Activated CD4-positive, alpha-beta T cell treated with anti-CD3 and anti-CD28 coated beads for 36 hours (primary cell): ENCODE measurements at regions of chr5 and their contacts with region 1.

Region 1: DNA sequence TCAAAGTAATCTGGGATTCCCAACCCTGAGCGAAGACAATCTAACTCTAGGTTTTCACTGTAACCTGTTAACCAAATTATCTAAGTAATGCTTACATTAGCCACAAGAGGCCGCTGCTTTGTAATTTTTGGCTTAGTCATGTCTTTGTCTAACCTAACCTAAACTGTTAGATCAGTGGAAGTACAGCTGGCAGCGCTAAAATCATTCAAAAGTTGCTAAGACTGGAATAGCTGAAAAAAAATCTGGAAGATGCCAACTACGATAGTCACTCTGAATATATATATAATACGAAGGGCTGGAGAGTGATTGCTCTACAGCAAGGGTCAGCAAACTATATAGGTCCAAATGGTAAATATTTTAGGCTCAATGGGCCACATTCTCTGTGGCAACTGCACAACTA is 60.2 kb downstream of the FBXO38 start:
- DNase-seq: peak; percentile 63
- ATAC-seq: peak; percentile 83
- H3K4me3 Mint-ChIP-seq: no peak overlapping the region
- H3K27ac Mint-ChIP-seq: no peak overlapping the region
- H3K4me1 Mint-ChIP-seq: no peaks in the 10 kb centered on the region
- H3K27me3 Mint-ChIP-seq: no peaks in the 10 kb centered on the region

Region 2: DNA sequence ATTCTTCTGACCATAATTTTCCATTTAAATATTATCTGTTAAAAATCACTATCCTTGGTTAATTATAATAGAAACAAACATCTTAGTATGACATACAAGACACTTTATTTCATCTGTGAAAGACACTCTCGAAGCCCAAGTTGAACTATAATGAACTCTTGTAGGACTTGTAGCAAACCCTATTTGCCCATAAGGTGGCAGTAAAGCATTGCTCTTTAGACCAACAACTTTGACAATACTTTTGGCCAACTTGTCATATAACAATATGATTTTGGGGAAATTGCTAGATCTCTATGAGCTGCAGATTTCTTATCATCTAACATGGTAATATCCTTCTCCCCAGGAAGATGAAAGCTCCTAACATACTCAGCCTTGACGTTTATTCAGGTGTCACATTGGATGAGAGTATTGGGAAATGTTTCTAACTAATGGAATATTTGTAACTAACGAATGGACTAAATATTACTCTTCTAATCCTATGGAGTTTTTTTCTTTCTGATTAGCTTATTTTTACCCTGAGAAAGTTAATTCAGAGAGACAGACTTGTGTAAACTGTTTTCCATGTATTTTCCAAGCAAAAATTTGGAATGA is 264.7 kb before region 1 on chr5:
- CTCF ChIA-PET with region 1: interaction called, 5 read pairs
- POLR2A ChIA-PET with region 1: no interaction called
- intact Hi-C with region 1: loop called in 1 of 2 experiments (anchors 1 kb)
- DNase-seq: no peak
- ATAC-seq: peak; percentile 53
- H3K4me3 Mint-ChIP-seq: no peak overlapping the region
- H3K27ac Mint-ChIP-seq: no peak overlapping the region
- H3K4me1 Mint-ChIP-seq: no peaks in the 10 kb centered on the region
- H3K27me3 Mint-ChIP-seq: peaks cover 17% of the 10 kb centered on the region